PC-9 (cell line): ENCODE measurements at regions of chr15 and their contacts with region 1.

Region 1: DNA sequence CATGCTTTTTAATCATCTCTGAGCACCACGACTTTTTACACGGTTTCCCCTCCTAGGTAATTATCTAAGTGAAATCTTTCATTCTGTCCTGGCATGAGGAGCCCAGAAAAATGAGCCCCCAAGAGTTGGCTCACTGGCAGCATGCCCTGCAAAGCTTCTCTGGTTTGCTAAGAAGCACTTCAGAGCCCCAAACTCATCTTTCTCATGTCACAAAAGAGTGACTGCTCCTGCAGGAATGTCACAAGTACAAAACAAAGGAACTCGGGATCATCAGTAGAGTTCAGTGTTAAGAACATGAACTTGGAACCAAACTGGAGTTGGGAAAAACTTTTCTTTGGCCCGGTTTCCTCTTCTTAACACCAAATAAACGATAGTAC is 123.9 kb downstream of the FOXB1 start:
- DNase-seq: peak in 1 of 2 experiments; percentile 63
- H3K4me3 ChIP-seq: peak overlapping the region; percentile 53
- H3K27ac ChIP-seq: peak overlapping the region; percentile 90
- H3K4me1 ChIP-seq: peaks cover 23% of the 10 kb centered on the region
- H3K27me3 ChIP-seq: no peaks in the 10 kb centered on the region
- CTCF ChIP-seq: no peak

Region 2: DNA sequence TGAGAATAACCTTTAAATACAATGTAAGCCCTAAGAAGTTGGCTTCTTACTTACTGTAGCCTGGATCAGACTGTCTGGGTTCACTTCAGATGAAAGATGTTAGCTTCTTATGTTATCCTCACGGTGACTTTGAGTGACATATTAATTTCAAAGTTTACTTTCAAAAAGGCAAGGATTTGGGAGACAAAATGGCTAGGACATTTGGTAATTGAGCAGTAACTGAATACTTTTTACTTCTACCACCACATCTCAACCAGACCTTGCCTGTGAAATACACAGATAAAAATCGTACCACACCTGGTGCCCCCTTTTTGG is 402.9 kb before region 1 on chr15:
- CTCF ChIA-PET with region 1: interaction called, 3 read pairs
- POLR2A ChIA-PET with region 1: no interaction called
- intact Hi-C with region 1: loop called (anchors 1 kb)
- DNase-seq: no peak
- H3K4me3 ChIP-seq: no peak overlapping the region
- H3K27ac ChIP-seq: no peak overlapping the region
- H3K4me1 ChIP-seq: no peaks in the 10 kb centered on the region
- H3K27me3 ChIP-seq: no peaks in the 10 kb centered on the region
- CTCF ChIP-seq: no peak

Region 3: DNA sequence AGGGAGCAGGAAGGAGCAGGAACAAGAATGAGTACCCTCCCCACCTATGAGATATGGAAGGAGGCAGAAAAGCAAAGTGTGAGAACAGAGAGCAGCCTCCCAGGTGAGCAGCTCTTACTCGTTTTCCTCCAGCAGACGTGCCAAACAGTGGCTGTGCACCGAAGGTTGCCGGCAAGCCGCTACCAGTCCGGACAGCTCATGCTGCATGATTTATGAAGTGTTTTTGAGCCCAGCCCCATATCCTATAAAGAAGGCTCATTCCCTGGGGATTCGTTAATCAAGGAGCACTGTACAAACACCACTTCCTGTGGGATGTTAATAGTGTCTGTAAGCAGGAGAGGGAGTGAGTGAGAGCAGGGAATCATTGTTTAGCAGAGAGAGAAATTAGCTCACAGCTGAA is 242.2 kb before region 1 on chr15:
- CTCF ChIA-PET with region 1: interaction called, 4 read pairs
- POLR2A ChIA-PET with region 1: interaction called, 20 read pairs
- intact Hi-C with region 1: no loop called
- DNase-seq: no peak
- H3K4me3 ChIP-seq: no peak overlapping the region
- H3K27ac ChIP-seq: no peak overlapping the region
- H3K4me1 ChIP-seq: peaks cover 9% of the 10 kb centered on the region; the same call in 1 of the 2 replicates
- H3K27me3 ChIP-seq: no peaks in the 10 kb centered on the region
- CTCF ChIP-seq: no peak

Region 4: DNA sequence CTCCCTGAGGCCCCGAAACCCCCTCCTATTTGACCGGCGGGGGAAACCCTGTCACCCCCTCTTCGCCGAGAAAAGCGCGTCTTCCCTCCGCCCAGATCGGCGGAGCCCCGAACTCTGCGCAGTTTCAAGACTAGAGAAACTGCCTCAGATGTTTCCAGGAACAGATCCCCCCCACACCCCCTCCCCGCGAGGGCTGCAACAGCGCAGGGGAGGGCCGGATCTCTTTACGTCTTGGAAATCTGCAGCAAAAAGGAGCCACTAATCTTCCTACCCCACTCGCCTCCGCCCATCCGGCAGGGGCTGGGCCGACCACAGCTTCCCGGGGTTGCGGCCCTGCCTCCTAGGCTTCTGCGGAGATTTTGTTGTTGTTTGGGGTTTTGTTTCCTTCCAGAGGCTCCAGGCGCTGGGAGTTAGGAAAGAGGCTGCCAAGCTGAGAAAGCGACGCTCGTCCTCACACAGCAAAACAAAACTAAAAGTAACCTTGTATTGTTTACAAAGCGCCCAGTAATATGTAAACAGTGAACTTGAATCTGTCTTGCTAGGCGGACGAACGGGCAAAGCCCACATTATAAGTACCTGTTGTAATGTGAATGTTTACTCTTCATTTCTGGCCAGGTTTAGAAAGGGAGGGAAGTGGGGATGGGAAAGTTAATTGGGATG is 121.7 kb before region 1 on chr15:
- CTCF ChIA-PET with region 1: interaction called, 9 read pairs
- POLR2A ChIA-PET with region 1: interaction called, 24 read pairs
- intact Hi-C with region 1: loop called (anchors 1 kb)
- DNase-seq: peak; percentile 88 to 91
- H3K4me3 ChIP-seq: peak overlapping the region; percentile 82
- H3K27ac ChIP-seq: peak overlapping the region; percentile 95
- H3K4me1 ChIP-seq: peaks cover 28% of the 10 kb centered on the region
- H3K27me3 ChIP-seq: no peaks in the 10 kb centered on the region
- CTCF ChIP-seq: no peak

Region 5: GRCh38 chr15:60070838-60071493 is 57.0 kb before region 1 on chr15:
- CTCF ChIA-PET with region 1: interaction called, 10 read pairs
- POLR2A ChIA-PET with region 1: no interaction called
- intact Hi-C with region 1: loop called (anchors 1 kb)
- DNase-seq: peak in 1 of 2 experiments; percentile 70
- H3K4me3 ChIP-seq: no peak overlapping the region
- H3K27ac ChIP-seq: peak overlapping the region; percentile 60
- H3K4me1 ChIP-seq: peaks cover 12% of the 10 kb centered on the region
- H3K27me3 ChIP-seq: no peaks in the 10 kb centered on the region
- CTCF ChIP-seq: no peak

Region 6: DNA sequence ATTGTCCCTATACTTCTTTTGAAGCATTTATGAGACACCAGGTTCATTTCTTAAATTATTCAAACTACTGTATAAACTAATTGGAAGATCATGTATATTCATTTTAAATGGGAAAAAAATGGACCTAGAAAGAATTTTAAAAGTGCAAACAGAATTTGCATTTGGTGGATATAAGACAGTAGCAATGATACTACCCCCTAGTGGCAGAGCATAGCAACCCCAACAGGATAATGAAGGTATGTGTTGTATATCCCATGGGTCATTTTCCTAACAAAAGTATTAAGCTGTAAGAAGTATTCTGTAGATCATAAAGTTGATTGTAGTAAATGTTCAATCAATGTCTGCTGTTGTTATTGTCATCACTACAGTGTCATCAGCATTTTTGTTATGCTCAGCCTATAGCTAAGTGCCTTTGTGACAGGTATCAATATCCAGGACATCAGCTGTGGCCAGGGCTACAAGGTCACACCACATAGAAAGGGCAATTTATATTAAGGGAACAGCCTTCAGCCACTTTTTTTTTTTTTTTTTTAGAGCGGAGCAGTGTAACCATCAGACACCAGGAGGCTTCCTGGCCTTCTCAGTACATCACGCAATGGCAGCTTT is 51.9 kb after region 1 on chr15:
- CTCF ChIA-PET with region 1: interaction called, 7 read pairs
- POLR2A ChIA-PET with region 1: no interaction called
- intact Hi-C with region 1: loop called (anchors 2 kb)
- DNase-seq: no peak
- H3K4me3 ChIP-seq: no peak overlapping the region
- H3K27ac ChIP-seq: no peak overlapping the region
- H3K4me1 ChIP-seq: no peaks in the 10 kb centered on the region
- H3K27me3 ChIP-seq: no peaks in the 10 kb centered on the region
- CTCF ChIP-seq: peak; percentile 78